GM18951 (cell line): ENCODE measurements at regions of chr14 and their contacts with region 1.

Region 1: DNA sequence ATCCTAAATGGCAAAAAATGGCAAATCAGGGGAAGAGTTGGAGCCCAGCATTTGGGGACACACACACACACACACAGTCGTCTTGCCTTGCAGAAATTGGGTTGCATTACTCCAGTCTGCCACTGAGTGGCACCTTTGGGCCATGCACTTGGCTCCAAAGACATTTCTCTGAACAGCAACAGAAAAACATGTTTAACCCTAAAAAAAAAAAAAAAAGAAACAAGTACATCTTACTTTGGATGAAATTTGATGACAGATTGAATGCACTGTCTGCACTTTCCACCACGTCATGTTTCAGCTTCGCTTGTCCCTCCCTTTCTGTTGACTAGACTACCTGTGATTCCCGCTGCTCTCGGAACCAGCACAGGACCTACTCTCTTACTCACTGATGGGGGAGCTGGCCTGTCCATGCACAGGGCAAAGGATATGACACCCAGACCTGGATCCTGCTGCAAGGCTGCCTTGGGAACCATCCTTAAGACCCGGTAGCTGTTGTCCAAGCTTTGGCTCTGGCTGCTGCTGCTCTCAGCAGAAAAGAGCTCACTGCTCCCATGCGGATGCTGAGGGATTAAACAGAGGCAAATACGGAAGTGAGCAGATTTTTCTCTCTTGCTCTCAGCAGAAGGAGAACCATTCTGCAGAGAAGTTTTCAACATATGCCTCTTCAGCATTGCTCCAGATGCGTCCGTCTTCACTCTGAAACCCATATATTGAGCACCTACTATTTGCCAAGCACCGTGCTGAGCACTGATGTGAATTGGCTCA is 376.8 kb downstream of the DPF3 start:
- POLR2A ChIP-seq: no peak

Region 2: DNA sequence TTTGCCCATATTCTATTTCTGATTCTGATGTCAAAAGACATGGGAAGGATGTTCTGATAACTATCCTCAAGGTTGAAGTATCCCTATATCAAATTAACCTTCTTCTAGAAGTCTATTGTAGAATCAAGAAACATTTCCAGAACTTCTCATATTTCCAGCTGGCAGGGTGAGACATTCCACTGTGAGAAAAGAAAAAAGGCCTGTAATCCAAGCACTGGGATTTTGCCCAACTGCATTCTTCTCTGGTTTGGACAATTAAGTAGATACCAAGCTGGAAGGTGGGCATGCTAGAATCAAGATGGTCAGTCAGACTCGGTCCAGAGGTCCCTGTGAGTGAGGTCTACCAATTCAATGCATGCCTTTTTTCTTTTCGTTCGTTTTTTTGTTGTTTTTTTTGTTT is 1768.7 kb before region 1 on chr14:
- in situ Hi-C with region 1: no loop called
- POLR2A ChIP-seq: no peak

Region 3: DNA sequence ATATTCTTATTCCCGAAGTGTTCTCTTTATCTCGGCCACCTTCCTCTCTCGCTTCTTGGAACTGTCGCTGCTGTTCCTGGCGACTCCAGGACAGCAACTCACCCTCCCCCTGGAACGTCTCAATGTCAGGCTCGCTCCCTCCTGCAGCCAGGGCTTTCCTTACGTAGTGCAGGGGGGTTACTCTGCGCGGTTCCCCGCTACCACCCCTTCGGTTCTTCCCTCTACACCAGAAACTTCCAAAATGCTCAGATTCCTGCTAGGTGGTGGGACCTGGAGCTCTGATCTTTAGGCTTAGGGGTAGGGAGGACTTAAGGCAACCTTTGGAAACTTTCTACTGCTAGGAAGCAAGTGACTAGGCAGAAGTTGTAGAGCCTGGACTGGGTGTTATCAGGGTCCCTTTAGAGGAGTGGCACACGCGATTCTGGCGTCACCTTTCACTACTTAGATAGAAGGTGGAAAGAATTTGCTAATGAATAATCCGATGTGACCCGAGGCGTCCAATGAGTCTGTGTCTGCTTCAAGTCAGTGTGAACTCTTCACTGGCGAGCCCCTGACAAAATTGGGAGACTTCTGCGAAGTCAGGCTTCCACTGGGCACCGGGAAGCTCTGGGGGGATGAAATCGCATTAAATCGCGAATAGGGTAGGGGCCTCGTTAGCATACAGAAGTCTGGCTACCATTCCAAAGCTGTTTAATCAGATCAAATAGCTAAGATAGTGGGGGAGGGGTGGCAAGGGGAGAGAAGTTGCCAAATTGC is 377.7 kb after region 1 on chr14:
- in situ Hi-C with region 1: loop called (anchors 5 kb)
- POLR2A ChIP-seq: no peak

Region 4: DNA sequence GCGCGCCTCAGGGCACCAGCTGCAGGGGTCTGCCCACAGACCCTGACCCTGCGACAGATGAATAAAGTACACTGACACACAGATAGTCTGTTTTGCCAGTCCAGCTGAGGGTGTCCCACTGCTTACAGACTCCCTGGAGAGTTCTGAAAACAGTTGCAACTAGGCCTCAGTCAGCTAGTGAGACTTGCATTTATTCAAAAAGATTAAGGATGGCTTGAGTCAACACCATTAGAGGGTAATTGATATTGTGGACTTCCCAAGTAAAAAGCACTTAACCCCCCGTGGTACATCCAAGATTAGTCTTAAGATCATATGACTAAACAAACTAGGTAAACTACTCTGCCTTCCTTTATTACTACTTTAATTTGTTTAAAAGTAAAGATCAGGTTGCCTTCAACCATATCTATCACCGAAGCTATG is 608.1 kb after region 1 on chr14:
- in situ Hi-C with region 1: no loop called
- POLR2A ChIP-seq: no peak

Region 5: GRCh38 chr14:73458151-73458976 is 941.2 kb after region 1 on chr14 and contains the start of gene NUMB:
- in situ Hi-C with region 1: loop called (anchors 25 kb)
- POLR2A ChIP-seq: peak; percentile 81